Natural killer cell (primary cell): ENCODE measurements at regions of chr14 and their contacts with region 1.

Region 1: GRCh38 chr14:64340560-64341196 is 46.5 kb upstream of the ESR2 start:
- DNase-seq: no peak
- ATAC-seq: no peak
- H3K4me3 ChIP-seq: no peak overlapping the region
- H3K4me3 Mint-ChIP-seq: peak overlapping the region; percentile 67
- H3K27ac ChIP-seq: no peak overlapping the region
- H3K27ac Mint-ChIP-seq: peak overlapping the region; percentile 62 to 65
- H3K4me1 ChIP-seq: peaks cover 12% of the 10 kb centered on the region
- H3K4me1 Mint-ChIP-seq: peaks cover 14 to 19% of the 10 kb centered on the region in 2 donors
- H3K27me3 ChIP-seq: no peaks in the 10 kb centered on the region
- H3K27me3 Mint-ChIP-seq: no peaks in the 10 kb centered on the region
- CTCF ChIP-seq: no peak

Region 2: DNA sequence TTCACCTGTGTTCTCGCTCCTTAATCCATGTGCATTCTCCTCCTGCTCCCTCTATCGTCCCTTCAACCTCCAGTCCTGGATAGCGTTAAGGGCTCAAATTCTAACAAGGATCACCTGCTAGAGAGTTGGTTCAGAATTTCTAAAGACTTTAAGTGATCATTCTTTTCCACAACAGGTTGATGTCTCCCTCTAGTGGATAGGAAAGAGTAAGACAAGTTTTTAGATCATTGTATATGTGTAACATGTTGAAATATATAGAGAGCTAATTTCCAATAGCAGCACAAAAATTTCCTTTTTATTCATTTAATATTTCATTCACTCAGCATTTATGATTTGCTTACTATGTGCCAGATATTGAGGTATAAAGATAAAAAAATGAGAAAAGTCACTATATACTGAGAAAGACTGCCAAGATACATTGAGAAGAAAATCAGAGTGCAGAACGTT is 37.2 kb before region 1 on chr14:
- intact Hi-C with region 1: no loop called
- DNase-seq: peak in 1 of 2 donors; percentile 67
- ATAC-seq: peak; percentile 71 to 81 (median 76)
- H3K4me3 ChIP-seq: no peak overlapping the region
- H3K4me3 Mint-ChIP-seq: no peak overlapping the region
- H3K27ac ChIP-seq: no peak overlapping the region
- H3K27ac Mint-ChIP-seq: no peak overlapping the region
- H3K4me1 ChIP-seq: no peaks in the 10 kb centered on the region
- H3K4me1 Mint-ChIP-seq: peaks cover 0 to 5% of the 10 kb centered on the region in 2 donors
- H3K27me3 ChIP-seq: no peaks in the 10 kb centered on the region
- H3K27me3 Mint-ChIP-seq: peaks cover 8 to 13% of the 10 kb centered on the region in 2 donors
- CTCF ChIP-seq: peak; percentile 88

Region 3: GRCh38 chr14:64478634-64479250 is 138.1 kb after region 1 on chr14:
- intact Hi-C with region 1: loop called (anchors 1 kb)
- DNase-seq: peak in 1 of 2 donors; percentile 67
- ATAC-seq: peak in 2 of 3 donors; percentile 52 to 57
- H3K4me3 ChIP-seq: no peak overlapping the region
- H3K4me3 Mint-ChIP-seq: no peak overlapping the region
- H3K27ac ChIP-seq: no peak overlapping the region
- H3K27ac Mint-ChIP-seq: peak overlapping the region in 1 of 2 donors; percentile 31
- H3K4me1 ChIP-seq: no peaks in the 10 kb centered on the region
- H3K4me1 Mint-ChIP-seq: peaks cover 0 to 4% of the 10 kb centered on the region in 2 donors
- H3K27me3 ChIP-seq: no peaks in the 10 kb centered on the region
- H3K27me3 Mint-ChIP-seq: no peaks in the 10 kb centered on the region
- CTCF ChIP-seq: peak; percentile 76

Region 4: DNA sequence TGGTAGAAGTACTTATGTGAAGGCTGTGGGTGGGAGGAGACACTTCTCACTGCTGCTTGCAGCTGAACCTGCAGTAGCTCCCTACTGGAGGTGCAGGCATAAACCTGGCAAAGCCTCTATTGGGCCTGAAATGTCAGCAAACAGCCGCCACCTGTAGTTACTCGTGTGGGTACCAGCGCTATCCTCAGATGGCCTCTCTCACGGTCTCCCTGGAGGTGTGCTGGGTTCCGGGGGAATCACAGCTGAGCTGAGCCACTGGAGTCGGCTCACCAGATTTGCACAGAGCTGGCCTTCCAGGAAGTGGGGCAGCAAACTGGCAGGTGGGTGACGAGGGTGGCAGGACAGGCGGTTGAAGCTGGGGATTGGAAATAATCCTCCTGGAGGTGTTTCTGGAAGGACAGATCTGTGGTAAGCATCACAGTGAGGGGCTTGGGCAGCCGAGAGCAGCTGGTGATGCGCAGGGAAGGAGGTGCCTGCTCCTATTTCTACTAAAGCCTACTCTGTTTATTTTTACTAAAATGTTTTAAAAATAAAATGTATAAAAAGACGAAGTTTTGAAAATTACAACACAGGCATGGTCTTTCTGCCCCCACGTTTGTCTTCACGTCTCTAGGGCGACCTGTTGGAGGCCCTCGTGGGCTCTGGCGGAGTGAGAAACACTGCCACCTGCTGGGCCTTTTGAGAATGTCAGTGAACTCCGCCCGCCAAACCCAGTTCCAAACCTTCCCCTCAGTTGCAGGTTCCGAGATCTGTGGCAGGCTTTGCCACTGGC is 295.7 kb after region 1 on chr14:
- intact Hi-C with region 1: loop called (anchors 1 kb)
- DNase-seq: peak; percentile 65 to 85
- ATAC-seq: peak; percentile 89 to 99 (median 99)
- H3K4me3 ChIP-seq: no peak overlapping the region
- H3K4me3 Mint-ChIP-seq: no peak overlapping the region
- H3K27ac ChIP-seq: no peak overlapping the region
- H3K27ac Mint-ChIP-seq: no peak overlapping the region
- H3K4me1 ChIP-seq: peaks cover 6% of the 10 kb centered on the region
- H3K4me1 Mint-ChIP-seq: no peaks in the 10 kb centered on the region
- H3K27me3 ChIP-seq: no peaks in the 10 kb centered on the region
- H3K27me3 Mint-ChIP-seq: peaks cover 0 to 3% of the 10 kb centered on the region in 2 donors
- CTCF ChIP-seq: peak; percentile 88